ENCODE measurements at regions of chr10 and their contacts with region 1.

Region 1: DNA sequence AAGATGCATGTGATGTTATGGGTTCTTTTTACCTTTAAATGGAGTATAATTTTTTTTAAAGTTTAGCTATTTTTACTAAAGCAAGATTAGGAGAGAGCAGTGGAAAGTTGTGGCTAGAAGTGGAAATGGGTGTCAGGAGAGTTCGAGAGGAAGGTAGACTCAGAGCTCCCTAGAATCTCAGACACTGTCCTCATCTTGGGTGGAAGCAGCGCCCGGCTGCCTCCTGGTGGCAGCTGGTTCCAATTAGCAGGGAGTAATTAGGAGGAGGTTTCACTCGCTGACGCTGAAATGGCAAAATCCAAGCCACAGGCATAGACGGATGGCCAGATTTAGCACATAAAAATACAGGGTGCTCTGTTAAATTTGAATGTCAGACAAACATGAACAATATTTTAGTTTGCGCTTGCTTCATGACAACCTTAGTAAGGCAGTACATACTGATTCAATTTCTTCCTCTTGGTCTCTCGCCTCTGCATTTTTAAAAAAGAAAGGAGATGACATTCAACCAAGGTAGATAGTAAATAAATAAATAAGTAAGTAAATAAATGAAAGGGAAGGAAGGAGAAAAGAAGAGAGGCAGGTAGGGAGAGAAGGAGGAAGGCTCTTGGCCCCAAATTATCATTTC is 58.5 kb downstream of the LGI1 start:
- H3K4me3 ChIP-seq: no peak overlapping the region
- H3K27ac ChIP-seq: no peak overlapping the region
- H3K4me1 ChIP-seq: peaks cover 2% of the 10 kb centered on the region; the same call in 1 of the 2 replicates
- CTCF ChIP-seq: peak; percentile 59; the same call in 1 of the 2 replicates

Region 2: DNA sequence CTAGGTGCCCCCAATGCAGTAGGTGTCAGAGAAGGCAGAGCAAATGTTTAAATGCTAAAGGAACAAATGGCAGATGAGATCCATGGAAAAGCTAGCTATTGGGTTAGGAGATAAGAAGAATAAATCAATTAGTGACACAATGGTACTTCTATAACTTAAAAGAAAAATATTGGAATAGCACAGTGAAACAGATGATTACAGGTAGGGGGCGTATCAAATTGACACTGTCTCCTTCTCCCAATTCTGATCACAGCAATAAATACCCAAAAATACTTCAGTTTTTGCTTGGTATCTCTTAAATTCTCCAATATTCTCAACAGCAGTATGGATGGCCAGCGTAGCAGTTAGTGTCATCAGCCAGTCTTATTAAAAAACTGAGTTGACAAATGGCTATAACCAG is 119.0 kb before region 1 on chr10:
- CTCF ChIA-PET with region 1: interaction called, 23 read pairs
- POLR2A ChIA-PET with region 1: interaction called, 7 read pairs
- H3K4me3 ChIP-seq: no peak overlapping the region
- H3K27ac ChIP-seq: no peak overlapping the region
- H3K4me1 ChIP-seq: no peaks in the 10 kb centered on the region
- CTCF ChIP-seq: no peak

Region 3: GRCh38 chr10:93722501-93722900 is 93.7 kb before region 1 on chr10:
- CTCF ChIA-PET with region 1: interaction called, 14 read pairs
- POLR2A ChIA-PET with region 1: no interaction called
- H3K4me3 ChIP-seq: no peak overlapping the region
- H3K27ac ChIP-seq: no peak overlapping the region
- H3K4me1 ChIP-seq: no peaks in the 10 kb centered on the region
- CTCF ChIP-seq: no peak

Region 4: DNA sequence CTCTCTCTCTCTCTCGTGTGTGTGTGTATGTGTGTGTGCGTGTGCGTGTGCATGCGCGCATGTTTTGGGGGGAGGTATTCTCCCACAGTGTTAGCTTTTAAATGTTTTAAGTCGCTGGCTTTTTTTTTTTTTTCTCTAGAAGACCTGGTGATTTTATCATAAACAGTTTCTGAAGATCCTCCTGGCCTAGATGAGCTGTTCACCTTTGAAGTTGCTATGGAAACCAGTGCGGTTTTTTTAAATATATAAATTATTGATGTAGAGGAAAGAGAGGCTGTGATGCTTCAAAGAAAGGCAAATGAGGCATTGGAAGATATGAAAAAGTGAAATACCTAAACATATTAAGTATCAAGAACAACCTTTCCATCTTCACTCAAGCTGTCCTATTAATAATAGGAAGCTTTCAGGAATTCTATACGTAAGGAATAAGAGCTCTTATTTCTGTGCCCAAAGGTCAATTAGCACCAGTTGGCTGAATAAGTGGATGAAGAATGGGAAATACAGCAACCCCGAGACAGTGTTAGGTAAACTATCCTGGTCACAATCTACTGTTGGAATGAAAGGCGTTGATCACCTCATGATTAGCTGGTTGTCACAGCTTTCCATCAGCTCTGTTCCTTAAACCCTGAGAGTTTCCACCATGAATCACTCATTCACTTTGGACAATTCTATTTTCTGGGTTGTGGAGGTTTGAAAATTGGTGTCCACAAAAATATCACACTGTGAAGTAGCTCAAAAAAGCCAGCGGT is 11.0 kb after region 1 on chr10:
- CTCF ChIA-PET with region 1: interaction called, 11 read pairs
- POLR2A ChIA-PET with region 1: no interaction called
- H3K4me3 ChIP-seq: no peak overlapping the region
- H3K27ac ChIP-seq: no peak overlapping the region
- H3K4me1 ChIP-seq: no peaks in the 10 kb centered on the region
- CTCF ChIP-seq: no peak

Measured in HEK293 (cell line).